Gastrocnemius medialis (tissue), 4 donors: ENCODE measurements at regions of chr17 and their contacts with region 1.

Region 1: GRCh38 chr17:63419949-63420867 is 25.9 kb downstream of the CYB561 start:
- DNase-seq: no peak
- ATAC-seq: no peak
- H3K4me3 ChIP-seq: no peak overlapping the region
- H3K27ac ChIP-seq: no peak overlapping the region
- H3K4me1 ChIP-seq: no peaks in the 10 kb centered on the region
- H3K27me3 ChIP-seq: no peaks in the 10 kb centered on the region
- CTCF ChIP-seq: no peak
- POLR2A ChIP-seq: no peak

Region 2: GRCh38 chr17:62692721-62693483 is 727.3 kb before region 1 on chr17:
- in situ Hi-C with region 1: loop called in 1 of 4 experiments (anchors 10 kb)
- intact Hi-C with region 1: no loop called
- DNase-seq: no peak
- ATAC-seq: no peak
- H3K4me3 ChIP-seq: no peak overlapping the region
- H3K27ac ChIP-seq: no peak overlapping the region
- H3K4me1 ChIP-seq: no peaks in the 10 kb centered on the region
- H3K27me3 ChIP-seq: no peaks in the 10 kb centered on the region
- CTCF ChIP-seq: peak in 1 of 5 experiments; percentile 28
- POLR2A ChIP-seq: no peak

Region 3: DNA sequence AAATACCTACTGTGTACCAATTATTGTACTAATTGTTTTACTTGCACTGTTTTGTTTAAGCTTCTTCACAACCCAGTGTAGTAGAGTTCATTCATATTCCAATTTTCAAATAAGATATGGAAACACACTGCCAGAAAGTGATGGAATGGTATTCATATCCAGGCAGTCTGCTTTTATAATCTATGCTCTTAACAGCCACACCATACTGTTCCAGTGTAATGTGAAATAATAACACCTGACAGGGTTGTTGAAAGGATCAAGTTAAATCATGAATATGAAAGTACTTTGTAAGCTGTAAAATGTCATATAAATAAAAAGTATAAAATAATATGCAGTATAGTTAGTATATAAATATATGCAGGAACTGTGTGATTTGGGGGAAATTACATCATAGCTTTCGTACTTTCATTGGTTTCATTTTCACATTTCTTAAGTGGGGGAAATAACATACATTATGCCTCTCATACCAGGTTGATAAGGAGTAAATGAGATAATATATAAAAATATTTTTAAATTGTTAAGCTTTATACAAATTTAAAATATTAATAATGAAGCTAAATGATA is 223.4 kb before region 1 on chr17:
- in situ Hi-C with region 1: no loop called
- intact Hi-C with region 1: no loop called
- DNase-seq: no peak
- ATAC-seq: no peak
- H3K4me3 ChIP-seq: peak overlapping the region in 1 of 4 donors; percentile 22
- H3K27ac ChIP-seq: no peak overlapping the region
- H3K4me1 ChIP-seq: no peaks in the 10 kb centered on the region
- H3K27me3 ChIP-seq: no peaks in the 10 kb centered on the region
- CTCF ChIP-seq: no peak
- POLR2A ChIP-seq: no peak

Region 4: GRCh38 chr17:63611354-63611753 is 191.1 kb after region 1 on chr17:
- in situ Hi-C with region 1: loop called (anchors 5 kb)
- intact Hi-C with region 1: loop called (anchors 1 kb)
- DNase-seq: no peak
- ATAC-seq: no peak
- H3K4me3 ChIP-seq: no peak overlapping the region
- H3K27ac ChIP-seq: no peak overlapping the region
- H3K4me1 ChIP-seq: no peaks in the 10 kb centered on the region
- H3K27me3 ChIP-seq: no peaks in the 10 kb centered on the region
- CTCF ChIP-seq: no peak
- POLR2A ChIP-seq: no peak

Region 5: DNA sequence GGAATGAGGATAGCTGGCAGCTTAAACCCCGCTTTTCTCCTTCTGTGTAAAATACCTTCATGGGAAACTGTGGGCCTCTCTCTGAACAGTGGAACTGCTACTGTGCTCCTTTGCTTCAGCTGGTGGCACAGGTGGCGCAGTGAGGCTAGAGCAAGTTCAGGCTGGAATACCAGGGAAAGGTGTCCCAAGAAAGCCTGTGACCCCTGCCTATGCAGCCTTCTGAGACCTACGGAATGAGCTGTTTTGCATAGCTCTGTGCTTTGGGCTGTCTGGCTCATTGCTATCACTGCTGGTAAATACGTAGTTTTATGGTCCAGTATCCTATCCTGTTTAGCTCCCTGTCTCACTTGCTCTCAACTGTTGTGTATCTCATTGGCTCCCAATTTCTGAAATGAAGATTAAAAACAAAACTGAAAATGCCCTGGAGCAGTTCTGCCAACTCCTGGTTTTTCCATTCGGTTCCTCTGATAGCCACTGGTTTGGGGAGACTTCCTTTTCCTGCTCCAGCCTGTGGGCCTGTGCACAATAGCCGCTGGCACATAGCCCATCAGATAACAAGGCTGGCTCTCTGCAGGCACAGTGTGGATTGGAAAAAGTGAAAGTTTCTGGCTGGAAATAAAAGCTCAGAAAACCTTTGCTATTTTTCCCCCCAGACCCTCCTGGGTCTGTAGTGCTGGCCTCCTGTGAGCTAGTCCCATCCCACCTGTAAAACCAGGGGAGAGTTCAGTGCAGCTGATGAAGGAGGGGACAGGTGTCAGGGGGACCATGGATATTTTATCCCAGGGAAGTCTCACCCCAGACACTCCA is 255.6 kb after region 1 on chr17:
- in situ Hi-C with region 1: no loop called
- intact Hi-C with region 1: no loop called
- DNase-seq: no peak
- ATAC-seq: peak; percentile 67 to 78
- H3K4me3 ChIP-seq: peak overlapping the region in 3 of 4 donors; percentile 15 to 32 (median 22)
- H3K27ac ChIP-seq: peak overlapping the region; percentile 29 to 71 (median 60)
- H3K4me1 ChIP-seq: peaks cover 14 to 26% of the 10 kb centered on the region in 2 donors
- H3K27me3 ChIP-seq: no peaks in the 10 kb centered on the region
- CTCF ChIP-seq: no peak
- POLR2A ChIP-seq: no peak